ENCODE measurements at regions of chr2 and their contacts with region 1.

Region 1: DNA sequence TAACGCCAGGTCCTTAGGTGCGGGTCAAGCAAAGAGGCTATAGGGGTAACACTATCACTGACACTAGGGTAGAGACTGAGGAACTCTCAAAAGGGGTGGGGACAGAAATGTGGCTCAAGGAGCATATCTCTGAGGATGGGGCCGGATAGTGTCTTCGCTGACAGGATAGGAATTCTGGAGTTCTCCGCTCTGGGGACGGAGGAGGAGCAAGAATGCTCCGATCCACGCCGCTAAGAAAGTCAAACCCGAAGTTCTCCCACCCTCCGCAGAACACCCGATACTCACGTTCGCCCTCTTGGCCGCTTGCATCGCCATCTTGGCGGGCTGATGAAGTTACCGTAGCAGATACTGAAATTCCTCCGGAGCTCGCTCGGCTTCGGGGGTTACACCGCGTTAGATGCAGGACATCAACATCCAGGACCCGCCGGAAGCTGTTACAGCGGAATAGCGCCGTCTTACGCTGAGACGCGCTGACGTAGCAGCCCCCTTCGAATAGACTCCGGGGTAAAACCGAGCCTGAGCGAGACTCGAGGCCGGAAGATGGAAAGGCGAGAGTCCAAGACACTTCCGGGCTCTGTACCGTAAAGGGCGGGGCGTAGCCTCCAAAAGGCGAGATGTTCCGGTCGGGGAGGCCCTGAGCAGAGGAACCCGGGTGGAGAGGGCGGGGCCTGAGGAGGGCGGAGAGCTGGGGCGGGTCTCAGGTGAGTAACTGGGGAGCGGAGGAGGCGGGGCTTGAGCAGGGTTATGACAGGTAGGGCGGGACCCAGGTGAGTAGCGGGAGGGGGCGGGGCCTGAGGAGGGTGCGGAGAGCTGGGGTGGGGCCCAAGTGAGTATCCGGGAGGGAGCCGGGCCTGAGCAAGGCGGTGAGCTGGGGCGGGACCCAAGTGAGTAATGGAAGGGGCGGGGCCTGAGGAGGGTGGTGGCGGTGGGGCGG is at the start of gene SF3B6:
- DNase-seq: peak; percentile 98
- ATAC-seq: peak; percentile 95
- H3K4me3 ChIP-seq: peak within 1 kb of the TSS; percentile 89
- H3K27ac ChIP-seq: peak within 1 kb of the TSS; percentile 85
- H3K4me1 ChIP-seq: peaks cover 9% of the 10 kb centered on the region
- H3K27me3 ChIP-seq: no peaks in the 10 kb centered on the region
- CTCF ChIP-seq: no peak
- EP300 ChIP-seq: peak in 1 of 2 experiments; percentile 27; a peak in 1 of 4 replicates
- POLR2A ChIP-seq: peak; percentile 94
- RAD21 ChIP-seq: no peak
- polyA plus RNA-seq, gene SF3B6: 538 to 584 TPM

Region 2: DNA sequence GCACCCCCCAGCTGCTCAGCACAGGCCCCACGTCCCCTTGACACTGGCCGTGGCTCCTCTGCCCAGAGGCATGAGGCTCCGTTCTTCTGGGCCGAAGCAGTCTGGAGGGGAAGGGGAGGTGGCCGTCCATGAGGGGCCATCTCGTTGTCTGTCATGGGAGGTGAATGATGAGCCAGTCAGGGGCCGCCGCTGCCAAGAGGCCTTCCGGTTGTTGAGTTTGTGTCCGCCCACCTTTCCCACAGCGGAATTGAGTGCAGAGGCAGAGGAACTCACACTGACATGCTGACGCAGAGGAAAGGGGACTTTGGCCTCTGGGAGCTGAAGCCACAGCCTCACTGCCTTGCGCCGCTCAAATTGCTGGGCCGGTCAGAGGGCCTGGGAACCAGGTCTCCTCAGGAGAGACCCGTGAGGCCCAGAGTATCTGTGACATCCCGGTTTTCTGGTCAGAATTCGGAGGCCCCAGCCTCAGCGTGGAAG is 417.7 kb before region 1 on chr2:
- CTCF ChIA-PET with region 1: no interaction called
- POLR2A ChIA-PET with region 1: no interaction called
- RAD21 ChIA-PET with region 1: no interaction called
- SMC1A ChIA-PET with region 1: no interaction called
- in situ Hi-C with region 1: no loop called
- intact Hi-C with region 1: no loop called
- DNase-seq: no peak
- ATAC-seq: no peak
- H3K4me3 ChIP-seq: no peak overlapping the region
- H3K27ac ChIP-seq: no peak overlapping the region
- H3K4me1 ChIP-seq: peaks cover 4% of the 10 kb centered on the region; the same call in 1 of the 2 replicates
- H3K27me3 ChIP-seq: no peaks in the 10 kb centered on the region
- CTCF ChIP-seq: no peak
- EP300 ChIP-seq: no peak
- POLR2A ChIP-seq: peak; percentile 47; the same call in 1 of the 2 replicates
- RAD21 ChIP-seq: no peak

Region 3: DNA sequence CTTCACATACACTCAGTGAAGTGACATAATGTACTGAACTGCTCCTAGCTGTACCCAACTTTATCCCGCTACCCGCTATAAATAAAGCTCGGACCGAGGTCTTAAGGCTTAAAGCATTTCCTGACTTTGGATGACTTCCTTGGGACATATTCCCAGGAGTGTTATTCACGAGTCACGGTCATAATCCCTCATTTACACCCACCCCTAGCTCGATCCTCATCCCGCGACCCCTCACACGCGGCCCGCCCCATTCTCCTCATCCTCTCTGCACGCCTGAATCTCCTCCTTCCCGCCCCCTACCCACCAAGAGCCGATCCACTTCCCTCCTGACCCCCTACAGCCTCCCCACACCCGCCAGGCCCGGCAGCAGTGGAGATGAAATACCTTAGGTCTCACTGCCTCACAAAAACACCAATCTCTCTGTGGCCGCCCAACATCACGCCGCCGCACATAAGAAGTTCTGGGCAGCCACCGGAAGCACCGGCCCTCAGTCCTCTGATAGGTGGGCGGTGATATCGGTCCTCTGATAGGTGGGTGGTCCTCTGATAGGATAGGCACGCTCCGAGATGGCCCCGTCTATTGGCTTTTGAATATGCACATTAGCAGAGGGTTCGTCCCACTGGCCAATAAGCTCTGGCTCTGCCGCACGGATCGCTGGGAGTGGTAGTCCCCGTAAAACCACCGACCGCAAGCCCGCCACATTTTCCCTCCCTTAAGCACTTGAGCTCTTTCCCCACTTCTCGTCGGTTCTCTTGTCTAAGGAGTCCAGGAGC is 29.1 kb before region 1 on chr2 and contains the start of gene WDCP:
- CTCF ChIA-PET with region 1: interaction called, 12 read pairs
- POLR2A ChIA-PET with region 1: interaction called, 12 read pairs
- RAD21 ChIA-PET with region 1: interaction called, 10 read pairs
- SMC1A ChIA-PET with region 1: interaction called, 3 read pairs
- in situ Hi-C with region 1: no loop called
- intact Hi-C with region 1: loop called (anchors 1 kb)
- DNase-seq: peak; percentile 97
- ATAC-seq: peak; percentile 100
- H3K4me3 ChIP-seq: peak within 1 kb of the TSS; percentile 78
- H3K27ac ChIP-seq: peak within 1 kb of the TSS; percentile 20; the same call in 1 of the 2 replicates
- H3K4me1 ChIP-seq: peaks cover 11% of the 10 kb centered on the region
- H3K27me3 ChIP-seq: peaks cover 0 to 5% of the 10 kb centered on the region in 2 experiments; a peak in 3 of 4 replicates
- CTCF ChIP-seq: no peak
- EP300 ChIP-seq: no peak
- POLR2A ChIP-seq: peak; percentile 94
- RAD21 ChIP-seq: no peak
- polyA plus RNA-seq, gene WDCP: 5.5 to 6.1 TPM

Region 4: DNA sequence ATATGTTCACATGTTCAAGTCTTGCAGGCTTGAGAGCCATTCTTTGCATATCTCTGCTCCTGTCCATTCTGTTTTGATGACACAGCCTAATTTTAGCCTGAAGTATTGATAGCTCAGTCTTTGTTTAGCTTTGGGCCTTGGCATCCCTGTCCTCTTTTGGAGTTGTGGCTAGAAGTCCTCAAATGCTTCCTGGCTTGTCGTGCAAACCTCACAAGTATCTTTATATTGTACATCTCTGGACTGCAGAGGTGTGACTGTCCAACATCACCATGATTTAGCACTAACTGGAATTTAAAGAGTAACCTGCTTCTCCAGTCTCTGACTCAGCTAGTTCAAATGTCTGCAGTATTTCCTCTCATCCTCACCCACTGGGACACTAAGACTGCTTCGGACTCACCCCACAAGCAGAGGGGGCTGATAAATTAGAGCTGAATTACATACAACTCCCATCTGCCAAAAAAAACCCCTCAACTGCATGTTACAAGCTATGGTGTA is 35.3 kb after region 1 on chr2:
- CTCF ChIA-PET with region 1: no interaction called
- POLR2A ChIA-PET with region 1: no interaction called
- RAD21 ChIA-PET with region 1: no interaction called
- SMC1A ChIA-PET with region 1: no interaction called
- in situ Hi-C with region 1: no loop called
- intact Hi-C with region 1: no loop called
- DNase-seq: no peak
- ATAC-seq: no peak
- H3K4me3 ChIP-seq: no peak overlapping the region
- H3K27ac ChIP-seq: no peak overlapping the region
- H3K4me1 ChIP-seq: no peaks in the 10 kb centered on the region
- H3K27me3 ChIP-seq: no peaks in the 10 kb centered on the region
- CTCF ChIP-seq: no peak
- EP300 ChIP-seq: no peak
- POLR2A ChIP-seq: no peak
- RAD21 ChIP-seq: no peak